PC-9 (cell line): ENCODE measurements at regions of chr3 and their contacts with region 1.

Region 1: DNA sequence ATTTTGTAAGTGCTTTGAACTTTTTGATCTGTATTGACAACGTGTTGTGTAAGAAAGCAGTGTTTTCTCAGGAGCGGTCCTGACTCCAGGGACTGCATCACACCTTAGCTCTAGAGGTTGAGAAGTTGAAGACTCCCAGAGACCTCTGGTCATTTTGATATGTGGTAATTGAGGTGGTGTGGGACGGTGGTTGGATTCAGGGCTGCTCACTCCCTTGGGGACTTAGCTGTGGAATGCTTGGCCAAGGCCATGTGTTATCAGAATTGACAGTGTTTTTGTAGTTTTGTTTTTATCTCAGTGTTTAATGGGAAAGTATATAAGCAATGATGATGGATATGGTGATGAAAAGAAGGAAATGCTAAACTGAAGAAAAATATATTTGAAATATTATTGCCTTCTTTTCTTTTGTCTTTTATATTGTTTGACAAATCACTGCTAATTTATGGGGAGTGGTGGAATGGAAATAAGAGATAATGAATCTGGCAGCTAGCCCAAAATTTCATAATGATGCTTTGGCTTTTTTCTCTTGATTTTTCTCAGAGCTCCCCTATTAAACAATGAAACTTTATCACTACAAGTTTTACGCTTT is 16.0 kb downstream of the CMSS1 start:
- DNase-seq: no peak
- H3K4me3 ChIP-seq: no peak overlapping the region
- H3K27ac ChIP-seq: no peak overlapping the region
- H3K4me1 ChIP-seq: no peaks in the 10 kb centered on the region
- H3K27me3 ChIP-seq: no peaks in the 10 kb centered on the region
- CTCF ChIP-seq: no peak

Region 2: GRCh38 chr3:99909714-99910494 is 76.2 kb after region 1 on chr3:
- CTCF ChIA-PET with region 1: interaction called, 10 read pairs
- POLR2A ChIA-PET with region 1: interaction called, 3 read pairs
- intact Hi-C with region 1: no loop called
- DNase-seq: peak; percentile 46 to 100
- H3K4me3 ChIP-seq: peak overlapping the region; percentile 26; the same call in 1 of the 2 replicates
- H3K27ac ChIP-seq: peak overlapping the region; percentile 91
- H3K4me1 ChIP-seq: peaks cover 52% of the 10 kb centered on the region
- H3K27me3 ChIP-seq: no peaks in the 10 kb centered on the region
- CTCF ChIP-seq: no peak

Region 3: DNA sequence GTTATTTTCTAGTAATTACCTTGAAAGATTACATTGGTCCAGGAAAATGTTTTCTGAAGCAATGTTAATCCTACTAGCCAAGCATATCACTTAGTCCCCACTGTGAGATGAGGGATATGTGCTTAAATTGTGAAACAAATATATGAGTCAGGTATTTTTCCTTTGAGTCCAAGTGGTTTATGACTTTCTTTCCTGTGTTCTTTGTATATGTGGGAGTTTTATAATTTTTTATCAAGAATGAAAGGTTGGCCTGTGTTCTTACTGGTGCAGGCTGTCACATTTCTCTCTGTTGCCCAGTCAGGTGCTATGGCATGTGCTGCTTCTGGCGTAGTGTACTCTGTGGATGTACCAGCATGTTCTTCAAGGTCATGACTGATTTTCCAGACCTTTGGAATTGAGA is 131.4 kb after region 1 on chr3:
- CTCF ChIA-PET with region 1: no interaction called
- POLR2A ChIA-PET with region 1: no interaction called
- intact Hi-C with region 1: no loop called
- DNase-seq: peak in 1 of 2 experiments; percentile 69
- H3K4me3 ChIP-seq: no peak overlapping the region
- H3K27ac ChIP-seq: peak overlapping the region; percentile 11; the same call in 1 of the 2 replicates
- H3K4me1 ChIP-seq: peaks cover 20% of the 10 kb centered on the region
- H3K27me3 ChIP-seq: no peaks in the 10 kb centered on the region
- CTCF ChIP-seq: no peak

Region 4: GRCh38 chr3:100254168-100254777 is 420.6 kb after region 1 on chr3:
- CTCF ChIA-PET with region 1: interaction called, 50 read pairs
- POLR2A ChIA-PET with region 1: no interaction called
- intact Hi-C with region 1: loop called (anchors 1 kb)
- DNase-seq: peak; percentile 53 to 67
- H3K4me3 ChIP-seq: no peak overlapping the region
- H3K27ac ChIP-seq: no peak overlapping the region
- H3K4me1 ChIP-seq: peaks cover 10% of the 10 kb centered on the region
- H3K27me3 ChIP-seq: no peaks in the 10 kb centered on the region
- CTCF ChIP-seq: peak; percentile 93

Region 5: GRCh38 chr3:100463002-100463401 is 629.3 kb after region 1 on chr3:
- CTCF ChIA-PET with region 1: interaction called, 9 read pairs
- POLR2A ChIA-PET with region 1: no interaction called
- intact Hi-C with region 1: loop called (anchors 5 kb)
- DNase-seq: peak; percentile 43 to 72
- H3K4me3 ChIP-seq: no peak overlapping the region
- H3K27ac ChIP-seq: no peak overlapping the region
- H3K4me1 ChIP-seq: no peaks in the 10 kb centered on the region
- H3K27me3 ChIP-seq: no peaks in the 10 kb centered on the region
- CTCF ChIP-seq: peak; percentile 98

Region 6: GRCh38 chr3:100703865-100704264 is 870.2 kb after region 1 on chr3:
- CTCF ChIA-PET with region 1: interaction called, 10 read pairs
- POLR2A ChIA-PET with region 1: no interaction called
- intact Hi-C with region 1: no loop called
- DNase-seq: no peak
- H3K4me3 ChIP-seq: no peak overlapping the region
- H3K27ac ChIP-seq: no peak overlapping the region
- H3K4me1 ChIP-seq: peaks cover 21% of the 10 kb centered on the region
- H3K27me3 ChIP-seq: no peaks in the 10 kb centered on the region
- CTCF ChIP-seq: no peak

Region 7: GRCh38 chr3:101518421-101518871 is 1684.7 kb after region 1 on chr3:
- CTCF ChIA-PET with region 1: interaction called, 12 read pairs
- POLR2A ChIA-PET with region 1: no interaction called
- intact Hi-C with region 1: no loop called
- DNase-seq: peak; percentile 26 to 79
- H3K4me3 ChIP-seq: no peak overlapping the region; the same call in 1 of the 2 replicates
- H3K27ac ChIP-seq: peak overlapping the region; percentile 23
- H3K4me1 ChIP-seq: peaks cover 23% of the 10 kb centered on the region
- H3K27me3 ChIP-seq: no peaks in the 10 kb centered on the region
- CTCF ChIP-seq: no peak